MCF 10A (cell line): ENCODE measurements at regions of chr7 and their contacts with region 1.

Region 1: GRCh38 chr7:37666026-37666780 is 17.4 kb upstream of the GPR141 start:
- DNase-seq: peak; percentile 95
- H3K4me3 Mint-ChIP-seq: peak overlapping the region; percentile 1
- H3K27ac Mint-ChIP-seq: peak overlapping the region; percentile 70
- H3K4me1 Mint-ChIP-seq: peaks cover 33% of the 10 kb centered on the region
- H3K27me3 Mint-ChIP-seq: no peaks in the 10 kb centered on the region
- CTCF ChIP-seq: no peak

Region 2: GRCh38 chr7:37645282-37646050 is 20.7 kb before region 1 on chr7:
- CTCF ChIA-PET with region 1: interaction called, 3 read pairs
- POLR2A ChIA-PET with region 1: interaction called, 4 read pairs
- intact Hi-C with region 1: loop called (anchors 1 kb)
- DNase-seq: no peak
- H3K4me3 Mint-ChIP-seq: no peak overlapping the region
- H3K27ac Mint-ChIP-seq: no peak overlapping the region
- H3K4me1 Mint-ChIP-seq: peaks cover 11% of the 10 kb centered on the region
- H3K27me3 Mint-ChIP-seq: no peaks in the 10 kb centered on the region
- CTCF ChIP-seq: no peak

Region 3: DNA sequence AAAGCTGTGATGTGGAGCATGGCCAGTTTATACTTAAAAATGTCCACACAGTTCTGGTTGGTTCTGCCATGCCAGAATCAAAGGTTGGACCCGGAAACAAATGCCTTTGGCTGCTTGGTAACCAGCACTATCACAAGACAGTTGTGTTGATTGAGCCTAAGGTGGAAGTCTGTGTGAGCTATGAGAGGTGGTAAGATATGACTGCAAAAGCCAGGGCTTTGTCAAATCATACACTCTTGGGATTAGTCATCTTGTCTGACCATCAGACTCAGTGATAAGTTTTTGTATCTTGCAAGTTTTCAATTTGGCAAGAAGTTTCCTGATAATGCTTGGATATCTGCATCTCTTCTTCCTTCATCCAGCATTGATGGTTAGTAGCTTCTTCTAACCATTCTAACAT is 52.9 kb after region 1 on chr7:
- CTCF ChIA-PET with region 1: no interaction called
- POLR2A ChIA-PET with region 1: no interaction called
- intact Hi-C with region 1: no loop called
- DNase-seq: no peak
- H3K4me3 Mint-ChIP-seq: no peak overlapping the region
- H3K27ac Mint-ChIP-seq: no peak overlapping the region
- H3K4me1 Mint-ChIP-seq: peaks cover 7% of the 10 kb centered on the region
- H3K27me3 Mint-ChIP-seq: no peaks in the 10 kb centered on the region
- CTCF ChIP-seq: no peak